OCI-LY7 (cell line): ENCODE measurements at regions of chr12 and their contacts with region 1.

Region 1: DNA sequence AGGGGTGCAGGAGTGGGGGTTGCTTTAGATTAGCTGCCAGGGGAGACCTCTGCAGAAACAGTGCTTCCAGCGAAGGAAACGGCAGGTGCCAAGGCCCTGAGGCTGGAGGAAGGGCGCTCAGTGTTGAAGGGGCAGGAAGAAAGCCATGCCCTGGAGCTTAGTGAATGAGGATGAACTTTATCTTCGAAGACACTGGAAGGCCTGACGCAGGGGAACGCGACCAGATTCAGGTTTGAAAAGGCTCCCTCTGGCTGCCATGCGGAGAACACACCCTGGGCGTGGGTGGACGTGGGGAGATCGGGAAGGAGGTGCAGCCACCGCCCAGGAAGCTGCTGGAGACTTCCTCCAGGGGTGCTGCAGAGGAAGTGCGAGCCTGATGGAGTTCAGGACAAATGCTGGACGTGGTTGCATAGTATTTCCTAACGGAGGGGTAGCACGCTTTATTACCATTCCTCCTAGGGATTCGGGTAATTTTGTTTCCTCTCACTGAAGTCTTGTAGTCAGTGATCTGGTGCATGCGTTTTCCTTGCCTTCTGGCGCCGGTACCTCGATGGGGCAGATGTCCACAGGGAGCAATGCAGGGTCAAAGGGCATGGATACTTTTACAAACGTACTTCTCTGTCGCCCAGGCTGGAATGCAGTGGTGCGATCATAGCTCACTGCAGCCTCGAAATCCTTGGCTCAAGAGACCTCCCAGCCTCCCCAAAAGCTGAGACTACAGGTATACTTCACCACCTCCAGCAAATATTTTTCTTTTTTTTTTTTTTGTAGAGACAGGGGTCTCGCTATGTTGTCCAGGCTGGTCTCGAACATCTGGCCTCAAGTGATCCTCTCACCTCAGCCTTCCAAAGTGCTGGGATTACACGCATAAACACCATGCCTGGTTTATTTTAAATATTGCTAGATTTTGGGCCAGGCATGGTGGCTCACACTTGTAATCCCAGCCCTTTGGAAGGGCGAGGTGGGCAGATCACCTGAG is 26.4 kb upstream of the UBC start:
- DNase-seq: peak; percentile 90
- H3K4me3 ChIP-seq: peak overlapping the region; percentile 72
- H3K27ac ChIP-seq: peak overlapping the region; percentile 88
- H3K4me1 ChIP-seq: peaks cover 29% of the 10 kb centered on the region
- CTCF ChIP-seq: peak; percentile 92

Region 2: GRCh38 chr12:123897221-123897620 is 1043.6 kb before region 1 on chr12:
- CTCF ChIA-PET with region 1: no interaction called
- POLR2A ChIA-PET with region 1: no interaction called
- intact Hi-C with region 1: no loop called
- DNase-seq: no peak
- H3K4me3 ChIP-seq: no peak overlapping the region
- H3K27ac ChIP-seq: no peak overlapping the region
- H3K4me1 ChIP-seq: no peaks in the 10 kb centered on the region
- CTCF ChIP-seq: no peak

Region 3: GRCh38 chr12:124906606-124907261 is 34.1 kb before region 1 on chr12:
- CTCF ChIA-PET with region 1: interaction called, 21 read pairs
- POLR2A ChIA-PET with region 1: interaction called, 7 read pairs
- intact Hi-C with region 1: loop called (anchors 1 kb)
- DNase-seq: peak; percentile 96
- H3K4me3 ChIP-seq: peak overlapping the region; percentile 6
- H3K27ac ChIP-seq: peak overlapping the region; percentile 23
- H3K4me1 ChIP-seq: peaks cover 65% of the 10 kb centered on the region
- CTCF ChIP-seq: peak; percentile 100

Region 4: DNA sequence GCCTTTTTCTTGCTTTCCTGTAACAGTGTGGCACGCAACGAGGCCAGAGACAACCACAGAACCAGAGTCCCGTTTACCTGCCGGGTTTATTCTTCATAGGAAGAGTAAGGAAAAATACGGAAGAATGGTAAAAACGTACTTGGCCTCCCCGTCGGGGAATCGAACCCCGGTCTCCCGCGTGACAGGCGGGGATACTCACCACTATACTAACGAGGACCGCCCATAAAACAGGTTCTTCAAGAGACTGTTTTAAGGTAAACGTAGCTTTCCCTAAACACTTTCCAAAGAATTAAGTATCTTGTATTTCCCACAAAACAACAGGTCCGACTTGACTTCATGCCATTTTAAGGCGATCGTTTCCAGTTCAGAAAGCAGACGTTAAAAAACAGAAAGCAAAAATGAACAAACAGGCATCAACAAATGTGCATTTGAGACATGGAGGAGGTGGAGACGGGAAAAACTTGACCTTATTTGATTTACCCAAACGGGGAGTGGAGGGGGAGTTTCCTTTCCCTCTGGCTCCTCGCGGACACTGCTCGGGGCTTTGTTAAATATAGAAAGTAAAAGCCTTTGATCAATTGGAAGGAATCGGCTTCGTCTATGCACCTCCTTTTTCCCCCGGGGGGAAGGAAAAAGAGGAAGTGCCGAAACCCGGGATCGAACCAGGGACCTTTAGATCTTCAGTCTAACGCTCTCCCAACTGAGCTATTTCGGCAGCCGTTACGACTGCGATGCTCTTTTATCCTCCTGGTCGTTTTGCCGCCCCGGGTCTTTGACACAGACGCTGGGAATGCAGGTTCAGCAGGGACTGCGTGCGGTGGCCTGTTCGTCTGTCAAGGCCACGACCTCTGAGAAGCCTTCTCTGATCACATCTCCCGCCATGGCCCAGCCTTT is 13.4 kb before region 1 on chr12:
- CTCF ChIA-PET with region 1: interaction called, 3 read pairs
- POLR2A ChIA-PET with region 1: interaction called, 167 read pairs
- intact Hi-C with region 1: loop called (anchors 1 kb)
- DNase-seq: peak; percentile 85
- H3K4me3 ChIP-seq: peak overlapping the region; percentile 81
- H3K27ac ChIP-seq: peak overlapping the region; percentile 66
- H3K4me1 ChIP-seq: peaks cover 19% of the 10 kb centered on the region
- CTCF ChIP-seq: no peak

Region 5: GRCh38 chr12:124992874-124993625 is 52.2 kb after region 1 on chr12:
- CTCF ChIA-PET with region 1: no interaction called
- POLR2A ChIA-PET with region 1: interaction called, 11 read pairs
- intact Hi-C with region 1: loop called (anchors 2 kb)
- DNase-seq: peak; percentile 95
- H3K4me3 ChIP-seq: peak overlapping the region; percentile 87
- H3K27ac ChIP-seq: peak overlapping the region; percentile 96
- H3K4me1 ChIP-seq: peaks cover 41% of the 10 kb centered on the region
- CTCF ChIP-seq: peak; percentile 91

Region 6: DNA sequence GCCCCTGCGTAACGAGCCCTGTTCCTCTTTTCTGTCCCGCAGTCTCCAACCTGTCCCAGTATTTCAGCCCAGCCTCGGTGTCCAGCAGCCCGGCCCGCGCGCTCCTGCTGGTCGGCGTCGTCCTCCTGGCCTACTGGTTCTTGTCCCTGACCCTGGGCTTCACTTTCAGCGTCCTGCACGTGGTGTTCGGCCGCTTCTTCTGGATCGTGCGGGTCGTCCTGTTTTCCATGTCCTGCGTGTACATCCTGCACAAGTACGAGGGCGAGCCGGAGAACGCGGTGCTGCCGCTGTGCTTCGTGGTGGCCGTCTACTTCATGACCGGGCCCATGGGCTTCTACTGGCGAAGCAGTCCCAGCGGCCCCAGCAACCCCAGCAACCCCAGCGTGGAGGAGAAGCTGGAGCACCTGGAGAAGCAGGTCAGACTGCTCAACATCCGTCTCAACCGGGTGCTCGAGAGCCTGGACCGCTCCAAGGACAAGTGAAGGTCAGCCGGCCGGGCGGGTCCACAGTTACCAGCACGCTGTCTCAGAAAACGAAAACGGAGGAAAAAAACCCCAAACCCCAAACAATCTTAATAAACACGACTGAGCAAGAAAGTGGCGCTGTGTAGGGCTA is 84.2 kb after region 1 on chr12:
- CTCF ChIA-PET with region 1: no interaction called
- POLR2A ChIA-PET with region 1: no interaction called
- intact Hi-C with region 1: no loop called
- DNase-seq: no peak
- H3K4me3 ChIP-seq: no peak overlapping the region
- H3K27ac ChIP-seq: no peak overlapping the region
- H3K4me1 ChIP-seq: no peaks in the 10 kb centered on the region
- CTCF ChIP-seq: no peak